SK-N-SH (cell line): ENCODE measurements at regions of chr9 and their contacts with region 1.

Region 1: GRCh38 chr9:122099271-122099869 is 6.3 kb upstream of the TTLL11 start:
- DNase-seq: peak; percentile 80
- H3K4me3 ChIP-seq: peak overlapping the region in 1 of 2 experiments; percentile 35; a peak in 1 of 4 replicates
- H3K27ac ChIP-seq: no peak overlapping the region
- H3K4me1 ChIP-seq: no peaks in the 10 kb centered on the region
- H3K27me3 ChIP-seq: no peaks in the 10 kb centered on the region
- CTCF ChIP-seq: peak; percentile 76
- EP300 ChIP-seq: no peak
- RAD21 ChIP-seq: peak; percentile 87

Region 2: GRCh38 chr9:122058709-122059108 is 40.7 kb before region 1 on chr9:
- CTCF ChIA-PET with region 1: interaction called, 14 read pairs
- POLR2A ChIA-PET with region 1: no interaction called
- DNase-seq: peak; percentile 36
- H3K4me3 ChIP-seq: no peak overlapping the region
- H3K27ac ChIP-seq: no peak overlapping the region
- H3K4me1 ChIP-seq: peaks cover 0 to 6% of the 10 kb centered on the region in 2 experiments; a peak in 3 of 4 replicates
- H3K27me3 ChIP-seq: no peaks in the 10 kb centered on the region
- CTCF ChIP-seq: no peak
- EP300 ChIP-seq: no peak
- RAD21 ChIP-seq: no peak

Region 3: GRCh38 chr9:122116040-122116439 is 16.7 kb after region 1 on chr9:
- CTCF ChIA-PET with region 1: interaction called, 327 read pairs
- POLR2A ChIA-PET with region 1: no interaction called
- DNase-seq: no peak
- H3K4me3 ChIP-seq: no peak overlapping the region
- H3K27ac ChIP-seq: no peak overlapping the region
- H3K4me1 ChIP-seq: no peaks in the 10 kb centered on the region; a peak in 1 of 4 replicates
- H3K27me3 ChIP-seq: peaks cover 9% of the 10 kb centered on the region; the same call in 1 of the 2 replicates
- CTCF ChIP-seq: no peak
- EP300 ChIP-seq: no peak
- RAD21 ChIP-seq: no peak

Region 4: GRCh38 chr9:122131401-122132001 is 32.1 kb after region 1 on chr9:
- CTCF ChIA-PET with region 1: interaction called, 327 read pairs
- POLR2A ChIA-PET with region 1: no interaction called
- DNase-seq: no peak
- H3K4me3 ChIP-seq: no peak overlapping the region
- H3K27ac ChIP-seq: no peak overlapping the region
- H3K4me1 ChIP-seq: peaks cover 0 to under 1% of the 10 kb centered on the region in 2 experiments; a peak in 2 of 4 replicates
- H3K27me3 ChIP-seq: no peaks in the 10 kb centered on the region
- CTCF ChIP-seq: no peak
- EP300 ChIP-seq: no peak
- RAD21 ChIP-seq: no peak

Region 5: DNA sequence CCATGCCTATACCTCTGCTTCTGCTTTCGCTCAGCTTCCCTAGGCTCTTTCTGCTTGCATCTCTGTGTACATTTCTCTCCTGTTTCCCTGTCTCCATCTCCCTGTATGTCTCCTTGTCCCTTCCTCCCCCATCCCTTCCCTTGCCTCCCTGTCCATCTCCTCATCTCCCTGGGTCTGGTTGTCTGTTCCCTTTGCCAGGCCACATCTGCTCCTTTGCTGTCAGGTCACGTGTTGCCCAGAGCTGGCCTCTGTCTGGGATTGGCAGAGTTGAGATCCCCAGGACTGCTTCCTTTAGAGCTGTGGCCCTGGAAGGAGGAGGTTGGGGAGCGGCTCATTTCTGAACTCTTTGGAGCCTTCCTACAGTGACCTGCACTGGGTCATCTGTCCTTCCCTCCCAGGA is 239.6 kb after region 1 on chr9:
- CTCF ChIA-PET with region 1: interaction called, 20 read pairs
- POLR2A ChIA-PET with region 1: no interaction called
- DNase-seq: peak; percentile 80
- H3K4me3 ChIP-seq: no peak overlapping the region
- H3K27ac ChIP-seq: no peak overlapping the region; a peak in 1 of 4 replicates
- H3K4me1 ChIP-seq: peaks cover 0 to 15% of the 10 kb centered on the region in 2 experiments; a peak in 1 of 4 replicates
- H3K27me3 ChIP-seq: no peaks in the 10 kb centered on the region
- CTCF ChIP-seq: no peak
- EP300 ChIP-seq: no peak
- RAD21 ChIP-seq: no peak

Region 6: DNA sequence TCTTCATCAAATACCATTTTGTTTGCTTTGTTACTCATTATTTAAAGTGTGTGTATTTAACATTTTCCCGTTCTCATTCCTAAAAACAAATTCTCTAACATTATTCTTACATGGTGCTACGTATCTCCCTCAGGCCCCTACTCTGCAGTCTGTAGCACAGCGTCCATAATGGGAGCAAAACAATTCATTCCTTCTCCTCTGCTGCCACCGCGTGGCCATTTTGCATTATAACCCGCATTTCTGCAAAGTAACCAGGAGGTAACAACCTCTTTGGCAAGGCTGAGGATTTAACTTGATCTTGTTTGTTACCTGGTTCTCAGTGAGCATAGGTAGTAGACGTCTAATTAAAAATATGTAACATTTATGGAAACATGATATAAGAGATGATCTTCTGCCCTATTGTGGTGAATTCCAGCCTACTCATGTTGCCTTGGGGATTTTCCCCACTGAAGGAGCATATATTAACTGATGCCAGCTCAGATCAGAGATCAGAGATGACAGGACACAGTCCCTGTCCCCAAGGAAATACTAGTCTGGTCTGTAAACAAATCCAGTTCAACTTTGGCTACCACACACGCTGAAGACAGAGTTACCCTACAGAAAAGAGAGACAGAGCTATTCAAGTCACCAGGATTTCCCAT is 711.1 kb after region 1 on chr9:
- CTCF ChIA-PET with region 1: interaction called, 13 read pairs
- POLR2A ChIA-PET with region 1: no interaction called
- DNase-seq: peak; percentile 78
- H3K4me3 ChIP-seq: no peak overlapping the region; a peak in 1 of 4 replicates
- H3K27ac ChIP-seq: no peak overlapping the region
- H3K4me1 ChIP-seq: peaks cover 0 to under 1% of the 10 kb centered on the region in 2 experiments; a peak in 1 of 4 replicates
- H3K27me3 ChIP-seq: no peaks in the 10 kb centered on the region
- CTCF ChIP-seq: peak; percentile 77
- EP300 ChIP-seq: no peak
- RAD21 ChIP-seq: peak; percentile 97